GM12878 (cell line): ENCODE measurements at regions of chr15 and their contacts with region 1.

Region 1: GRCh38 chr15:74382004-74382816 is 14.8 kb upstream of the CYP11A1 start:
- DNase-seq: no peak
- ATAC-seq: peak; percentile 53
- H3K4me3 ChIP-seq: no peak overlapping the region
- H3K27ac ChIP-seq: peak overlapping the region; percentile 97
- H3K4me1 ChIP-seq: peaks cover 71% of the 10 kb centered on the region
- H3K27me3 ChIP-seq: no peaks in the 10 kb centered on the region
- CTCF ChIP-seq: peak; percentile 93 to 98 (median 97); a peak in 5 of 6 replicates
- EP300 ChIP-seq: no peak
- POLR2A ChIP-seq: no peak
- RAD21 ChIP-seq: peak; percentile 96

Region 2: GRCh38 chr15:74407055-74407691 is 25.0 kb after region 1 on chr15:
- CTCF ChIA-PET with region 1: interaction called, 226 read pairs
- POLR2A ChIA-PET with region 1: interaction called, 302 read pairs
- RAD21 ChIA-PET with region 1: interaction called, 262 read pairs
- SMC1A ChIA-PET with region 1: interaction called, 336 read pairs
- in situ Hi-C with region 1: no loop called
- intact Hi-C with region 1: loop called (anchors 1 kb)
- DNase-seq: no peak
- ATAC-seq: no peak
- H3K4me3 ChIP-seq: no peak overlapping the region
- H3K27ac ChIP-seq: no peak overlapping the region
- H3K4me1 ChIP-seq: peaks cover 41% of the 10 kb centered on the region
- H3K27me3 ChIP-seq: no peaks in the 10 kb centered on the region
- CTCF ChIP-seq: no peak
- EP300 ChIP-seq: no peak
- POLR2A ChIP-seq: no peak
- RAD21 ChIP-seq: no peak

Region 3: DNA sequence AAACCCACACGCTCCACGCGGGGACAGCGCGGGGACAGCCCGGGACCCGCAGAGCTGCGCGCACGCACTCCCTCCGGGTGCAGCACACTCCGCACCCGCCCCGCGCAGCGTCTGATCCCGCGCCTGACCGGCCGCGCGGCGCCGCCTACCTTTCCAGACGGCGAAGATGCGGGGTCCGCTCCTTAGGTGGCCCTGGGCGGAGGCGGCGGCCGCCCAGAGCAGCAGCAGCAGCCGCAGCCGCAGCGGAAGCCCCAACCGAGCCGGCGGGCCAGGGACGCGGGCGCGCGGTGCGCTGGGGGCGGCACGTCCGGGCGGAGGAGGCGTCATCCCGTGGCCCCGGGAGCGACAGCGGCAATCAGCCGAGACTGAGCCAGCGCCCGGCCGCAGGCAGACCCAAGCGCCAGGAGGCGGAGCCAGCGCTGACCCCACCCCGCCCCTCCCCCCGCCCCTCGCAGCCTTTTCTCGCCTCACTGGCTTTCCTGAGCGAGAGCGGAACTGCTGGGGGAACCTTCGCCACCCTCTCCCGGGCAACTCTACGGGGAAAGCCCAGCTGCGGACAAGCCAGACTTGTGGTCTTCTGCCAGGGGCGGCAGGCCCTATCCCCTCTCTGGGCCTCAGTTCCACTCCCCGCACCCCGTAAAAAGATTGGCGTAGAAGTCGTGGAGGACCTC is 51.5 kb after region 1 on chr15 and contains the start of gene SEMA7A:
- CTCF ChIA-PET with region 1: interaction called, 655 read pairs
- POLR2A ChIA-PET with region 1: interaction called, 143 read pairs
- RAD21 ChIA-PET with region 1: interaction called, 228 read pairs
- SMC1A ChIA-PET with region 1: interaction called, 544 read pairs
- in situ Hi-C with region 1: loop called (anchors 5 kb)
- intact Hi-C with region 1: loop called (anchors 1 kb)
- DNase-seq: peak; percentile 57
- ATAC-seq: peak; percentile 81
- H3K4me3 ChIP-seq: peak within 1 kb of the TSS; percentile 98
- H3K27ac ChIP-seq: peak within 1 kb of the TSS; percentile 87
- H3K4me1 ChIP-seq: peaks cover 32% of the 10 kb centered on the region
- H3K27me3 ChIP-seq: no peaks in the 10 kb centered on the region
- CTCF ChIP-seq: no peak
- EP300 ChIP-seq: peak in 1 of 2 experiments; percentile 25; a peak in 2 of 4 replicates
- POLR2A ChIP-seq: peak; percentile 98
- RAD21 ChIP-seq: no peak
- polyA plus RNA-seq, gene SEMA7A: 0.08 to 1.1 TPM

Region 4: DNA sequence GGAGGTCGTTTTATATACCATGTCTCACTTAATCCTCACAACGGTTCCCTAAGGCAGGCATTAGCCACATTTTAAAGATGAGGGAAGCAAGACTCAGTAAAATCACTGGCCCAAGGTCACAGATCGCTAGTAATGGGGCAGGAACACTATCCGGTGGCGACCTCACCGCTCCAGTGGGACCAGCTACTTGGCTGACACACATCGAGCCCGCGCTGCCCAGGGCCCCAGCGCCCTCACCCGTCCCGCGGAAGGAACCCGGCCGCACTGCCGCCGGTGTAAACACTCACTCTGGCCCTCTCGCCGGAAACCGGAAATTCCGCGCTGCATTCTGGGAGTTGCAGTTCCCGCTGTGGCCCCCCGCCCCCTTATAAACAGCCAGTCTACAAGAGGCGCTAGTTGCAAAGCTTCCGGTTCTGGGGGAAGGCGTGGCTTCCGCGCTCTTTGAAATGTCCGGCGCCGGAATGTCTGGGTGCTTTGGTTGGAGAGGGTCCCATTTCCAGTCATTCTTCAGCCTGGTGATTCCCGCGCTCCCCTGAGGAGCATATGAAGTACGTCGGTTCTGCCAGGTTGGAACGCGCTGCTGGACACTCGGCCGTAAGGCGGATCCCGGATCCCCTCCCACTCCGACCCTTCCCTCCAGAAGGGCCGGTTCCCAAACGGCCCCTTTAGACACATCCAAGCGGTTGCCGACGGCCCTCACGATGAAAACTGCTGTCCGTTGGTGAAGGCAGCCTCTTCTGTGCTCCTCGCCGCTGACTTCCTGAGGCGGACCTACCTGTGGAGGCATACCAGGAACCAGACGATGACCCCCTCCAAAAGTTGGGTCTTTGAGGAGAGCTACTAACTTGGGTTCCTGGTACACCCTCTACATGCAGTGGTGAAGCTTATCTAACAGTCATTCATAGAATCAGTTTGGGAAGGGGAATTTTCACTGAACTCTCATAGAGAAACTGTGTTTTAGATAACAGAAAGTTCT is 78.9 kb after region 1 on chr15 and contains the start of gene UBL7:
- CTCF ChIA-PET with region 1: interaction called, 18 read pairs
- POLR2A ChIA-PET with region 1: interaction called, 18 read pairs
- RAD21 ChIA-PET with region 1: interaction called, 36 read pairs
- SMC1A ChIA-PET with region 1: interaction called, 16 read pairs
- in situ Hi-C with region 1: no loop called
- intact Hi-C with region 1: no loop called
- DNase-seq: peak; percentile 77
- ATAC-seq: peak; percentile 92
- H3K4me3 ChIP-seq: peak within 1 kb of the TSS; percentile 92
- H3K27ac ChIP-seq: peak within 1 kb of the TSS; percentile 93
- H3K4me1 ChIP-seq: peaks cover 11% of the 10 kb centered on the region
- H3K27me3 ChIP-seq: no peaks in the 10 kb centered on the region
- CTCF ChIP-seq: peak in 2 of 3 experiments; percentile 7 to 48; a peak in 3 of 6 replicates
- EP300 ChIP-seq: no peak
- POLR2A ChIP-seq: peak; percentile 98
- RAD21 ChIP-seq: no peak
- polyA plus RNA-seq, gene UBL7: 25.9 to 59.1 TPM

Region 5: GRCh38 chr15:74540761-74541493 is 158.7 kb after region 1 on chr15 and contains the start of gene ARID3B:
- CTCF ChIA-PET with region 1: interaction called, 9 read pairs
- POLR2A ChIA-PET with region 1: interaction called, 4 read pairs
- RAD21 ChIA-PET with region 1: interaction called, 8 read pairs
- SMC1A ChIA-PET with region 1: interaction called, 5 read pairs
- in situ Hi-C with region 1: loop called (anchors 5 kb)
- intact Hi-C with region 1: no loop called
- DNase-seq: peak; percentile 93
- ATAC-seq: peak; percentile 88
- H3K4me3 ChIP-seq: peak within 1 kb of the TSS; percentile 99
- H3K27ac ChIP-seq: peak within 1 kb of the TSS; percentile 95
- H3K4me1 ChIP-seq: peaks cover 9% of the 10 kb centered on the region
- H3K27me3 ChIP-seq: no peaks in the 10 kb centered on the region
- CTCF ChIP-seq: no peak
- EP300 ChIP-seq: no peak
- POLR2A ChIP-seq: peak; percentile 91
- RAD21 ChIP-seq: no peak
- polyA plus RNA-seq, gene ARID3B: 1.1 to 1.8 TPM